ENCODE measurements at regions of chr9 and their contacts with region 1.

Region 1: GRCh38 chr9:127763918-127764384 is 14.5 kb downstream of the SH2D3C start:
- DNase-seq: no peak
- ATAC-seq: peak; percentile 45
- H3K4me3 Mint-ChIP-seq: no peak overlapping the region
- H3K27ac Mint-ChIP-seq: peak overlapping the region; percentile 54
- H3K4me1 Mint-ChIP-seq: peaks cover 48% of the 10 kb centered on the region
- H3K27me3 Mint-ChIP-seq: no peaks in the 10 kb centered on the region

Region 2: GRCh38 chr9:127742435-127743088 is 21.4 kb before region 1 on chr9:
- CTCF ChIA-PET with region 1: interaction called, 14 read pairs
- DNase-seq: no peak
- ATAC-seq: no peak
- H3K4me3 Mint-ChIP-seq: no peak overlapping the region
- H3K27ac Mint-ChIP-seq: no peak overlapping the region
- H3K4me1 Mint-ChIP-seq: peaks cover 4% of the 10 kb centered on the region
- H3K27me3 Mint-ChIP-seq: no peaks in the 10 kb centered on the region

Region 3: DNA sequence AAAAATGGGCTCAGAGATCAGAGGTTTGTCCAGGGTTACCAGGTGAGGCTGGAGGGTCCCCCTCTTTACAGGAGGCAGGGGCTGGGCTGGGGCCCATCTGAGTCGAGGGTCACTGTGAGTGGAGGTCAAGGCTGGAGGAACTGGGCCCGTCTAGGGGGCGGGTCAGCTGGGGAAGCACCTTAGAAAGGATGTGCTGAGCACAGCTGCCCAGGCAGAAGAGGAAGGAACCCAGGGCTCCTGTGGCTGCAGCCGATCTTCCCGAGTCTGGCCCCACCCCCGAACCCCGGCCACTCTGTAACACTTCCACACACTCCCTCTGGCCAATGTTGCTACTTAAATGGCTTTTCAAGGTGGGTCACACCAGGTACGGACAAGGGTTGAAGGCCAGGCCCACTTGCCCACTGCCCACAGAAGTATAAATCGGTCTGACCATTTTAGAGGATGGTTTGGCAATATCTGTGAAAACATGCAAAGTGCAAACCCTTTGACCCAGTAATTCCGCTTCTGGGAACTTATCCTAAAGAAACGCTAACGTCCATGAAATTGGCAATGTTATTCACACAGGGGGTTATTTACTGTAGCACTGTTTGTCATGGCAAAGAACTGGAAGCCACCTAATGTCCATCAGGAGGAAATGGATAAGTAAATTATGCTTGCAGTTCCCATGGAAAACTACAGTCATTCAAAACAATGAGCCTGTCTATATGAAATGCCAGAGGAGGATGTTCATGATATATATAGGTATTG is 247.3 kb after region 1 on chr9:
- CTCF ChIA-PET with region 1: no interaction called
- DNase-seq: no peak
- ATAC-seq: no peak
- H3K4me3 Mint-ChIP-seq: no peak overlapping the region
- H3K27ac Mint-ChIP-seq: no peak overlapping the region
- H3K4me1 Mint-ChIP-seq: peaks cover 28% of the 10 kb centered on the region
- H3K27me3 Mint-ChIP-seq: no peaks in the 10 kb centered on the region